ENCODE measurements at regions of chr5 and their contacts with region 1.

Region 1: DNA sequence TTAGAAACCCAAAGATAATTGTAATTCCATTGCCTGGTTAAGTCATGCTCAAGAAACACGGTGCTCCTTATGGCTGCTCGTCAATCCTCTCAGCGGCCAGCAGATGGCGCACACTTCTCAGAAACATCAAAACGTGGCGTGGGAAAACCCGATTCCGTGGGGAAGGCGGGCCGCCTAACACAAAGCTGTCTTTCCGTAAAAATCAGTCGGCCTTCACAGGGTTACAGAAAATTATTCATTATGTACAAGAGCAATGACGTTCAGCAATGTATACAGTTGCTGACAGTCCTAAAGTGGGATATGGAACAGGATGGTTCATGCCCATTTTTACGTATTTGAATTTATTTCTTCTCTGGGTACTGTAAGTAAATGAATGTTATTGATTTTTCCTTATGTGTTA is 83.5 kb downstream of the PDE4D start:
- DNase-seq: peak; percentile 68 to 69
- ATAC-seq: peak in 6 of 8 donors; percentile 46 to 76 (median 64)
- H3K4me3 ChIP-seq: peak overlapping the region in 1 of 10 donors; percentile 16
- H3K27ac ChIP-seq: no peak overlapping the region
- H3K4me1 ChIP-seq: peaks cover 0 to 4% (median 0%) of the 10 kb centered on the region in 9 donors
- H3K27me3 ChIP-seq: peaks cover 0 to 26% (median 6%) of the 10 kb centered on the region in 7 donors
- CTCF ChIP-seq: peak; percentile 79 to 98 (median 93)

Region 2: DNA sequence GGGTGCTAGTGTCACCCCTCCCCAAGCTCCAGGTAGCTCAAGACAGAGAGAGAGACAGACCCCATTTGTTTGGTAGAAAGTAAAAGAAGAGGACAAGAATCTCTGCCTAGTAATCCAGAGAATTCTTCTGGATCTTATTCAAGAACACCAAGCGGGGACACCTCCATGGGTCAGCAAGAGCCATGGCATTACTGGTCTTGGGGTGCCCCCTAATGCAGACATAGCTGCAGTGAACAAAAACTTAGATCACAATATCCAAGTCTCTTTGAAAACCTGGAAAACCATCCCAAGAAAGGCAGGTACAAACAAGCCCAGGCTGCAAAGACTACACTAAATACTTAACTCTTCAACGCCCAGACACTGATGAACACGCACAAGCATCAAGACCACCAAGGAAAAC is 113.4 kb after region 1 on chr5:
- intact Hi-C with region 1: loop called in 1 of 10 experiments (anchors 10 kb)
- DNase-seq: no peak
- ATAC-seq: no peak
- H3K4me3 ChIP-seq: no peak overlapping the region
- H3K27ac ChIP-seq: no peak overlapping the region
- H3K4me1 ChIP-seq: no peaks in the 10 kb centered on the region
- H3K27me3 ChIP-seq: peaks cover 0 to 4% (median 0%) of the 10 kb centered on the region in 7 donors
- CTCF ChIP-seq: peak in 4 of 9 donors; percentile 18 to 35 (median 26)

Region 3: GRCh38 chr5:60287174-60287771 is 477.2 kb after region 1 on chr5:
- intact Hi-C with region 1: loop called in 2 of 10 experiments (anchors 5 to 10 kb)
- DNase-seq: peak in 1 of 2 donors; percentile 19
- ATAC-seq: no peak
- H3K4me3 ChIP-seq: no peak overlapping the region
- H3K27ac ChIP-seq: no peak overlapping the region
- H3K4me1 ChIP-seq: no peaks in the 10 kb centered on the region
- H3K27me3 ChIP-seq: no peaks in the 10 kb centered on the region
- CTCF ChIP-seq: peak in 8 of 9 donors; percentile 9 to 70 (median 30)

Region 4: DNA sequence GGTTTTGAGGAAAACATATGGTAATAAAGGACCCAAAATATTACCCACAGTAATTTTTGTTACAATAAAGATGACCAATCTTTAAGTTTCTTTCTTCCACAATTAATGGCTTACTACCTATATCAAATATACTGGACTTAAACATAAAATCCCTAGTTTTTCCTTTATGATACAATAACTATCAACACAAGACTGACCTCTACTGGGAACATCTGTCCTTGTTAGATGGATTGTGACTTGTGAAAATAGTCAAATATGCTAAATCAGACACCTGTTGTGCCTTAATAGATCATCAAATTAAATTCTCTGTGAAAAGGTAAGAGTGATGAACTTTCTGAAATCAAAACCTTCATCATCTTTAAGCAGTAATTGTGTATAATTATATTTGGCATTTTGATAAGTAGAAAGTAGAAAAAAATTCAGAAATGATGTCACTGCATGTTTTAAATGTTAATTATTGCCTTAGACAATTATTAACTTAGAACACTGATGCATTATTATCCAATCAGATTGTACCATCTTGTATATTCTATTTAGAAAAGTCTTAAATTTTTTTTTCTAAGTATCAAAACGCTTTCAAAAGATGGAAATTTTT is 776.4 kb after region 1 on chr5:
- intact Hi-C with region 1: loop called in 9 of 10 experiments (anchors 2 to 10 kb)
- DNase-seq: no peak
- ATAC-seq: no peak
- H3K4me3 ChIP-seq: no peak overlapping the region
- H3K27ac ChIP-seq: no peak overlapping the region
- H3K4me1 ChIP-seq: no peaks in the 10 kb centered on the region
- H3K27me3 ChIP-seq: no peaks in the 10 kb centered on the region
- CTCF ChIP-seq: peak; percentile 37 to 72 (median 53)

Region 5: DNA sequence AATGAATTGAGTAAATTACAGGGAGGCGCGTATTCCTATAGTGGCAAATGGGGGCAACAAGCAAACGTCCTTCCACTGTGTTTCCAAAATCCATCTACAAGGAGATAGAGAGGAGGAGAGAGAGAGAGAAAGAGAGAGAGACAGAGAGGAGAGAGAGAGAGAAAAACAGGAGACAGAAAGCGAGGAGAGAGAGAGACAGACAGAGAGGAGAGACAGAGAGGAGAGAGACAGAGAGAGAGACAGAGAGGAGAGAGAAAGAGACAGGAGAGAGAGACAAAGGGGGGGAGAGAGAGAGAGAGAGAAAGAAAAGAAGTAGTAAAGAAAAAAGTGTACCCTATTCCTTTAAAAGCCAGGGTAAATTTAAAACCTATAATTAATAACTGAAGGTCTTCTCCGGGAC is 850.0 kb after region 1 on chr5:
- intact Hi-C with region 1: loop called in 5 of 10 experiments (anchors 5 to 10 kb)
- DNase-seq: no peak
- ATAC-seq: no peak
- H3K4me3 ChIP-seq: no peak overlapping the region
- H3K27ac ChIP-seq: no peak overlapping the region
- H3K4me1 ChIP-seq: no peaks in the 10 kb centered on the region
- H3K27me3 ChIP-seq: no peaks in the 10 kb centered on the region
- CTCF ChIP-seq: no peak

Region 6: DNA sequence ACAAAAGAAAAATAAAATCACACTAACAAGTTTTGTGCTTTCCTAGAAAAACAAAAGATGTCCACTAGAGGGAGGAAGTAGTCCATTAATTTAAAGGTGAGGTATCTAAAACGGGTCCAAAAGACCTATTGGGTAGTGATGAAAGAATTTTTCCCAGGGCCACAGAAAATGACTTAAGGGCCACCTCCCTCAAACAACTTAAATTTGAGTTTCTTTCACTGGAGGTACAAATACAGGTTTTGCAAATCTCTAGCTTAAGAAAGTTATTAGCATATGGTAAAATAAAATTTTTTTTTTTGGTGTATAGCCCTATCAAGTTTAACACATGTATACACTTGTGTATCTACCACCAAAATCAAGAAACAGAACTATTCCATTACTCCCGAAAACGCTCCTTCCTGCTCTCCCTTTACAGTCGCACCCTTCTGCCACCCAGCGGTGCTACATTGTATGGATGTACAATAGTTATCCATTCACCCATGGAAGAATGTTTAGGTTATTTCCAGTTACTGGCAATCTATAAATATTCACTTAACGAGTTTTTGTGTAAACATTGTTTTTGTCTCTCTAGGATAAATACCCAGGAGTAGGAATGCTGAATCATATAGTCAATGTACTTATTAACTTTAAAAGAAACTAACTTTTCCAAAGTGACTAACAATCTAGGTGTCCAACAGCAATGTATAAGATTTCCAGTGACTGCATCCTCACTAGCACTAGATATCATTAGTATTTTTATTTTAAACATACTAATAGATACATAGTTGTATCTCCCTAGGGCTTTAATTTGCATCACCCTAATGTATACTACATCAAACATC is 868.0 kb after region 1 on chr5:
- intact Hi-C with region 1: loop called in 3 of 10 experiments (anchors 5 to 10 kb)
- DNase-seq: no peak
- ATAC-seq: no peak
- H3K4me3 ChIP-seq: no peak overlapping the region
- H3K27ac ChIP-seq: no peak overlapping the region
- H3K4me1 ChIP-seq: peaks cover 0 to 2% (median 0%) of the 10 kb centered on the region in 9 donors
- H3K27me3 ChIP-seq: peaks cover 0 to 6% (median 0%) of the 10 kb centered on the region in 7 donors
- CTCF ChIP-seq: peak; percentile 26 to 64 (median 52)

Measured in heart right ventricle (tissue), 16 donors.